MCF 10A (cell line): ENCODE measurements at regions of chr15 and their contacts with region 1.

Region 1: DNA sequence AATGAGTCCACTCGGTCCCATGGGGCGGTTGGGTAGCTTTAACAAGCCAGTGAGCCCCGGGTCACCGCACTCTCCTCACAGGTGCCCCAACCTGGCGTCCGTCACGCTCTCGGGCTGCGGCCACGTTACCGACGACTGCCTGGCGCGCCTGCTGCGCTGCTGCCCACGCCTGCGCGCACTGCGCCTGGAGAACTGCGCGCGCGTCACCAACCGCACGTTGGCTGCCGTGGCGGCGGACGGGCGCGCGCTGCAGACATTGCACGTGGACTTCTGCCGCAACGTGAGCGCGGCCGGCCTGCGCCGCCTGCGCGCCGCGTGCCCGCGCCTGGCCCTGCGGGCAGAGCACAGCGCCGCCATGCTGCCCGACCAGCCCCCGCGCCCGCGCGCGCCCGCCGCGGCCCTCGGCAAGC is 3.4 kb downstream of the FBXL22 start:
- DNase-seq: peak; percentile 84
- H3K4me3 Mint-ChIP-seq: peak overlapping the region; percentile 83
- H3K27ac Mint-ChIP-seq: peak overlapping the region; percentile 27
- H3K4me1 Mint-ChIP-seq: peaks cover 11% of the 10 kb centered on the region
- H3K27me3 Mint-ChIP-seq: no peaks in the 10 kb centered on the region
- CTCF ChIP-seq: no peak

Region 2: DNA sequence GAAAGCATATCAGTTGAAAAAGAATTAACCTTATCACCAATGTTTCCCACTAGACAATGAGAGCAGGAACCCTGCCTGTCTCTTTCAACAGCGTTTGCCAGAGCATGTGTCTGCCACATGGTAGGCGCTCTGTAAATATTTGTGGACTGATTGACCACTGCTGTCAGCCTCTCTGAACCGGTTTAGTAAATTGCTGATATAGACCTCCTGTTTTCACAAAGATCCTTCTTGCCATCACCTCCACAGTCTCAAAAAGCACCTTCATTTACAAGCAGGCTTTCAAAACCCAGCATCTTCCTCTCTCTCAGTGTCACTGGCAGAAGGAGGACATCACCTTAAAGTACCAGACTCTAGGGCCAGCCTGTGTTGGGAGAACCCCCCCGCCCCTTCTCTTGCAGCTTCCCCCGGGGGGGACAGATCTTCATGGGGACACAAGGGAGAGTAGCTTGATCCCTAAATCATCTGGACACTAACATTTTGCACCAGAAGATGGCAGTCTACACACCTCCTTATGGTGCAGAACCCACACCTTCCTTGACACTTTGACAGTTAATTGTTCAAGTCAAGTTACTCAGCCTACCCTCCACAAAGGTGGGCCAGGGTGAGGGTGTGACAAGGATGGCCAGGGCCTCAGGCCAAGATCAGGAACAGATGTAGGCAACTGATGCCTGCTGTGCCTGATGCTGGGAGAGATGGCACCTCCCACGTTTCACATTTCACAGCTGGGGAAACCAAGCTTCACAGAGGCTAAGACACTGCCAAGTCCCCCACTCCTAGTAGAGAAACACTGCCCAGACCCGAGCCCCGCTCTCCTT is 134.0 kb before region 1 on chr15:
- CTCF ChIA-PET with region 1: interaction called, 41 read pairs
- POLR2A ChIA-PET with region 1: interaction called, 47 read pairs
- intact Hi-C with region 1: loop called (anchors 1 kb)
- DNase-seq: peak; percentile 82
- H3K4me3 Mint-ChIP-seq: no peak overlapping the region
- H3K27ac Mint-ChIP-seq: no peak overlapping the region
- H3K4me1 Mint-ChIP-seq: no peaks in the 10 kb centered on the region
- H3K27me3 Mint-ChIP-seq: no peaks in the 10 kb centered on the region
- CTCF ChIP-seq: peak; percentile 61

Region 3: DNA sequence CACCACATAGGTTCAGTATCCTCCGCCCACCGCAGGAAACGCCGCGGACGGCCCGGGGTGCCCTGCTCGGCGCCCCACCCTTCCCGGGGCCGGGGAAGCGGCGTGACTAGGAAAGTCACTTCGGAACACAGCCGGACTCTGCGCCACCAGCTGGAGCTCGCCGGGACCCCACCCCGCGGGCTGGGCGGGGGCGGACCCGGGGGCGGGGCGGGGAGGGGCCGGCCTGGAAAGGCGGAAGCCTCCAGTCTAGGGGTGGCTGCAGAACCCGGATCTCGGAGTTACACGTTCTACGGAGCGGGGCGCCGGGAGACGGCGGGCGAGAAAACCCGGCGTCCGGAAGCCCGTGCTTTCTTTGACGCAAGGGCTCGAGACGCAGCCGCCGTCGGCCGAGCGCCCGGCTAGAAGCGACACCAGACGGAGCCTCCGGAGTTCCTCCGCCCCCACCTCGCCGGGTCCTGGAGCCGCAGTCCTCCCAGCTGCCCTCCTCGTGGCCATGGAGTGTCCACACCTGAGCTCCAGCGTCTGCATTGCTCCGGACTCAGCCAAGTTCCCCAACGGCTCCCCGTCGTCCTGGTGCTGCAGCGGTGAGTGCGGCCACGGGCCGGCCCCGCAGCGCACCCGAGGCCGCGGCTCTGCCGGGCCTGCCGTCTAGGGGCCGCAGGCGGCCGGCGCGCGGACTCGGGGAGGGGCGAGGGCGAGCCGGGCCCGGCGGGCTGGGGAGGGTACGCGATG is 96.2 kb before region 1 on chr15 and contains the start of gene USP3:
- CTCF ChIA-PET with region 1: interaction called, 34 read pairs
- POLR2A ChIA-PET with region 1: interaction called, 186 read pairs
- intact Hi-C with region 1: loop called (anchors 1 kb)
- DNase-seq: peak; percentile 93
- H3K4me3 Mint-ChIP-seq: peak within 1 kb of the TSS; percentile 87
- H3K27ac Mint-ChIP-seq: peak within 1 kb of the TSS; percentile 97
- H3K4me1 Mint-ChIP-seq: peaks cover 43% of the 10 kb centered on the region
- H3K27me3 Mint-ChIP-seq: no peaks in the 10 kb centered on the region
- CTCF ChIP-seq: peak; percentile 40
- total RNA-seq, gene USP3: 59.0 and 70.2 TPM in 2 replicates

Region 4: GRCh38 chr15:63522225-63522578 is 78.4 kb before region 1 on chr15:
- CTCF ChIA-PET with region 1: interaction called, 7 read pairs
- POLR2A ChIA-PET with region 1: interaction called, 23 read pairs
- intact Hi-C with region 1: no loop called
- DNase-seq: peak; percentile 73
- H3K4me3 Mint-ChIP-seq: no peak overlapping the region
- H3K27ac Mint-ChIP-seq: peak overlapping the region; percentile 41
- H3K4me1 Mint-ChIP-seq: peaks cover 64% of the 10 kb centered on the region
- H3K27me3 Mint-ChIP-seq: no peaks in the 10 kb centered on the region
- CTCF ChIP-seq: no peak

Region 5: GRCh38 chr15:63582718-63583426 is 17.7 kb before region 1 on chr15:
- CTCF ChIA-PET with region 1: interaction called, 4 read pairs
- POLR2A ChIA-PET with region 1: interaction called, 34 read pairs
- intact Hi-C with region 1: no loop called
- DNase-seq: no peak
- H3K4me3 Mint-ChIP-seq: no peak overlapping the region
- H3K27ac Mint-ChIP-seq: no peak overlapping the region
- H3K4me1 Mint-ChIP-seq: peaks cover 12% of the 10 kb centered on the region
- H3K27me3 Mint-ChIP-seq: no peaks in the 10 kb centered on the region
- CTCF ChIP-seq: no peak

Region 6: DNA sequence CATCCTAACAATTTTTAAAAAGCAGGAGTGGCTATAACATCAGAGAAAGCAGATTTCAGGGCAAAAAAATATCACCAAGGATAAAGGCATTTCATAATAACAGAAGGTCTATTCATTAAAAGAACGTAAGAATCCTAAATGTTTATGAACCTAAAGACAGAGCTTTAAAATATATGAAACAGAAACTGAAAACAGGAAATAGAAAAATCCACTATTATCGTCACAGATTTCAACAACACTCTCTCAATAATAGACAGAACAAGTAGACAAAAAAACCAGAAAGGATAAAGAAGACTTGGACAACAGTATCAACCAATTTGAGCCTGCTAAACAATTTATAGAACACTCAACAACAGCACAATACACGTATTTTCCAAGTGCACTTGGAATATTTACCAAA is 68.0 kb after region 1 on chr15:
- CTCF ChIA-PET with region 1: no interaction called
- POLR2A ChIA-PET with region 1: no interaction called
- intact Hi-C with region 1: no loop called
- DNase-seq: no peak
- H3K4me3 Mint-ChIP-seq: no peak overlapping the region
- H3K27ac Mint-ChIP-seq: no peak overlapping the region
- H3K4me1 Mint-ChIP-seq: no peaks in the 10 kb centered on the region
- H3K27me3 Mint-ChIP-seq: no peaks in the 10 kb centered on the region
- CTCF ChIP-seq: no peak

Region 7: DNA sequence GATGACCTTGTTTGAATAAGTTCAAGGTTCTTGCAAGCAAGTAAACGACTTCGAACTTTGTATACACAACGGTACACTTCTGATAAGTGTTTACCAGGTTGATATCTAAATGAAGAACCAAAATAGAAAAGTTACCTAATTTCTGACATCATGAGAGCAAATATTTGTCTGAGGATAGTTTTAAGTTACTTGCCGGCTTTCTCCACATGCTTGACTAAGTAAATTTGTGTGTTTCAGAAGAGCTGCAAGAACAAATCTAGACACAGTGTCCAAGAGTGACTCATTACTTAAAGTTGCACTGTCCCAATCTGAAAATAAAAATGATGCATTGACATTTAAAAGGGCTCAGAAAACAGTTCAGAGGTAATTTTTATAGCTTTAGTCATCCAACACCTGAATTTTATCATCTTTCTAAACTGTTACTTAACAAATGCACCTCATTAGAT is 118.0 kb after region 1 on chr15:
- CTCF ChIA-PET with region 1: no interaction called
- POLR2A ChIA-PET with region 1: no interaction called
- intact Hi-C with region 1: no loop called
- DNase-seq: peak; percentile 56
- H3K4me3 Mint-ChIP-seq: peak overlapping the region; percentile 26
- H3K27ac Mint-ChIP-seq: peak overlapping the region; percentile 75
- H3K4me1 Mint-ChIP-seq: peaks cover 27% of the 10 kb centered on the region
- H3K27me3 Mint-ChIP-seq: no peaks in the 10 kb centered on the region
- CTCF ChIP-seq: no peak